GM12878 (cell line): ENCODE measurements at regions of chr13 and their contacts with region 1.

Region 1: GRCh38 chr13:36346222-36347083 is at the start of gene SPART:
- DNase-seq: peak; percentile 34
- ATAC-seq: peak; percentile 86
- H3K4me3 ChIP-seq: peak within 1 kb of the TSS; percentile 77
- H3K27ac ChIP-seq: peak within 1 kb of the TSS; percentile 70
- H3K4me1 ChIP-seq: no peaks in the 10 kb centered on the region
- H3K27me3 ChIP-seq: 0 out of 4 replicates have a peak, but pooled peaks cover 0 to 3% of the 10 kb centered on the region in 2 experiments
- CTCF ChIP-seq: peak; percentile 95 to 98 (median 96)
- EP300 ChIP-seq: no peak
- POLR2A ChIP-seq: peak; percentile 54
- RAD21 ChIP-seq: peak; percentile 83
- polyA plus RNA-seq, gene SPART: 17.6 to 20.9 TPM

Region 2: DNA sequence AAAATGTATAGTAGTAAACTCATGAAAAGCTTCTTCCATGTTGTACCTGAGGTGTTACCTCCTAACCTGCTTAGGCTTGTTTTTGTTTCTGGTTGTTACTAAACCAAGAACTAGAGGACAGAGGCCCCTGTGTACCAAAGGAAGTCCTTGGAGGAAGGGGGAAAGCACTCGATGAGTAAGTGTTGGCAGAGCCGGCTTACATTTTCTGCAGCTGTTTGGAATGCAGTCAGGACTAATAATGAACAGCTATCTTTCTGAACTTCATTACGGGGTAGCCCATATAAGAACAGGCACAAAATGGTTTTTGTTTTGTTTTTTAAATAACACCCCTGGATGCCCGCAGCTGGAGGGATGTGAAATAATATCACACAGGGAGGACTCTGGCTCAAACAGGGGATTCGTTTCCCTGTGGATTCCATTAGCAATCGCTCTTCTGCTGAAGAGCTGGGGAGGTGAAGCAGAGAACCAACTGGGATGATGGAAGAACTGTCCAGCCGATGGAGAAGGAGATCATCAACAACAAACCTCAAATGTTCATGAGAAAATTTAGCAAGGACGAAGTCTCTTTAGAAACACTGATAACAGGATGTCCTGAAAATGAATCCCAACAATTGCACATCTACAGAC is 655.8 kb before region 1 on chr13:
- CTCF ChIA-PET with region 1: no interaction called
- POLR2A ChIA-PET with region 1: no interaction called
- RAD21 ChIA-PET with region 1: no interaction called
- SMC1A ChIA-PET with region 1: no interaction called
- in situ Hi-C with region 1: no loop called
- intact Hi-C with region 1: no loop called
- DNase-seq: no peak
- ATAC-seq: no peak
- H3K4me3 ChIP-seq: no peak overlapping the region
- H3K27ac ChIP-seq: no peak overlapping the region
- H3K4me1 ChIP-seq: no peaks in the 10 kb centered on the region
- H3K27me3 ChIP-seq: no peaks in the 10 kb centered on the region
- CTCF ChIP-seq: no peak
- EP300 ChIP-seq: no peak
- POLR2A ChIP-seq: no peak
- RAD21 ChIP-seq: no peak

Region 3: GRCh38 chr13:35744566-35745178 is 601.8 kb before region 1 on chr13:
- CTCF ChIA-PET with region 1: no interaction called
- POLR2A ChIA-PET with region 1: no interaction called
- RAD21 ChIA-PET with region 1: no interaction called
- SMC1A ChIA-PET with region 1: no interaction called
- in situ Hi-C with region 1: no loop called
- intact Hi-C with region 1: no loop called
- DNase-seq: no peak
- ATAC-seq: no peak
- H3K4me3 ChIP-seq: no peak overlapping the region
- H3K27ac ChIP-seq: no peak overlapping the region
- H3K4me1 ChIP-seq: no peaks in the 10 kb centered on the region
- H3K27me3 ChIP-seq: no peaks in the 10 kb centered on the region
- CTCF ChIP-seq: no peak
- EP300 ChIP-seq: no peak
- POLR2A ChIP-seq: no peak
- RAD21 ChIP-seq: no peak

Region 4: GRCh38 chr13:36057029-36057428 is 289.4 kb before region 1 on chr13:
- CTCF ChIA-PET with region 1: no interaction called
- POLR2A ChIA-PET with region 1: no interaction called
- RAD21 ChIA-PET with region 1: no interaction called
- SMC1A ChIA-PET with region 1: no interaction called
- in situ Hi-C with region 1: no loop called
- intact Hi-C with region 1: no loop called
- DNase-seq: no peak
- ATAC-seq: no peak
- H3K4me3 ChIP-seq: no peak overlapping the region
- H3K27ac ChIP-seq: no peak overlapping the region
- H3K4me1 ChIP-seq: no peaks in the 10 kb centered on the region
- H3K27me3 ChIP-seq: no peaks in the 10 kb centered on the region
- CTCF ChIP-seq: no peak
- EP300 ChIP-seq: no peak
- POLR2A ChIP-seq: no peak
- RAD21 ChIP-seq: no peak

Region 5: DNA sequence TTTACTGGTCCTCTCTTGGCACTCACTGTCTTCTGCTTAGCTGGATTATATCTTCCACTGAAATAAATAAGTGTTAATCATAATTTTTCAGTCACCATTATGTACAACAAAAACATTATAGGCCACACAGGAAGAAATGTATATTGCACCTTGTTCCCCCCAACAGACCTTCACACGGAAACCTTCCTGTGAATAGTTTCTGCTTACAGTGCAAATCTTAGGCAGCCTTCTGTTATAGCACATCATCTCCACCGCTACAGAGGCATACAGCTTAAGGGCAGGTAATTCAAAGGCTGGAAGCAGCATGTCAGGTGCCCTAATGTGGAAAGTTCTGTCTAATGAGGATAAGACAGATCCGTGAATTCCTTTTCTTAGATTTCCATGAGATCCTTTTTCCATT is 115.2 kb before region 1 on chr13:
- CTCF ChIA-PET with region 1: no interaction called
- POLR2A ChIA-PET with region 1: no interaction called
- RAD21 ChIA-PET with region 1: no interaction called
- SMC1A ChIA-PET with region 1: no interaction called
- in situ Hi-C with region 1: no loop called
- intact Hi-C with region 1: no loop called
- DNase-seq: no peak
- ATAC-seq: no peak
- H3K4me3 ChIP-seq: no peak overlapping the region
- H3K27ac ChIP-seq: no peak overlapping the region
- H3K4me1 ChIP-seq: no peaks in the 10 kb centered on the region
- H3K27me3 ChIP-seq: no peaks in the 10 kb centered on the region
- CTCF ChIP-seq: no peak
- EP300 ChIP-seq: no peak
- POLR2A ChIP-seq: no peak
- RAD21 ChIP-seq: no peak

Region 6: GRCh38 chr13:36282818-36283445 is 63.5 kb before region 1 on chr13:
- CTCF ChIA-PET with region 1: interaction called, 15 read pairs
- POLR2A ChIA-PET with region 1: no interaction called
- RAD21 ChIA-PET with region 1: interaction called, 10 read pairs
- SMC1A ChIA-PET with region 1: interaction called, 9 read pairs
- in situ Hi-C with region 1: no loop called
- intact Hi-C with region 1: no loop called
- DNase-seq: no peak
- ATAC-seq: peak; percentile 70
- H3K4me3 ChIP-seq: no peak overlapping the region
- H3K27ac ChIP-seq: no peak overlapping the region
- H3K4me1 ChIP-seq: no peaks in the 10 kb centered on the region
- H3K27me3 ChIP-seq: no peaks in the 10 kb centered on the region
- CTCF ChIP-seq: peak; percentile 61 to 80 (median 68)
- EP300 ChIP-seq: no peak
- POLR2A ChIP-seq: no peak
- RAD21 ChIP-seq: peak; percentile 84

Region 7: GRCh38 chr13:36362251-36362650 is 15.8 kb after region 1 on chr13:
- CTCF ChIA-PET with region 1: interaction called, 26 read pairs
- POLR2A ChIA-PET with region 1: interaction called, 4 read pairs
- RAD21 ChIA-PET with region 1: interaction called, 67 read pairs
- SMC1A ChIA-PET with region 1: interaction called, 30 read pairs
- in situ Hi-C with region 1: no loop called
- intact Hi-C with region 1: no loop called
- DNase-seq: no peak
- ATAC-seq: peak; percentile 73
- H3K4me3 ChIP-seq: no peak overlapping the region
- H3K27ac ChIP-seq: no peak overlapping the region
- H3K4me1 ChIP-seq: no peaks in the 10 kb centered on the region
- H3K27me3 ChIP-seq: no peaks in the 10 kb centered on the region
- CTCF ChIP-seq: no peak
- EP300 ChIP-seq: no peak
- POLR2A ChIP-seq: no peak
- RAD21 ChIP-seq: no peak

Region 8: GRCh38 chr13:36420437-36420891 is 74.0 kb after region 1 on chr13:
- CTCF ChIA-PET with region 1: interaction called, 15 read pairs
- POLR2A ChIA-PET with region 1: interaction called, 3 read pairs
- RAD21 ChIA-PET with region 1: interaction called, 9 read pairs
- SMC1A ChIA-PET with region 1: interaction called, 13 read pairs
- in situ Hi-C with region 1: loop called (anchors 5 kb)
- intact Hi-C with region 1: loop called (anchors 2 kb)
- DNase-seq: peak; percentile 25
- ATAC-seq: peak; percentile 86
- H3K4me3 ChIP-seq: no peak overlapping the region
- H3K27ac ChIP-seq: no peak overlapping the region
- H3K4me1 ChIP-seq: no peaks in the 10 kb centered on the region; the same call in 1 of the 2 replicates
- H3K27me3 ChIP-seq: no peaks in the 10 kb centered on the region
- CTCF ChIP-seq: peak; percentile 79 to 86 (median 84)
- EP300 ChIP-seq: no peak; a peak in 1 of 4 replicates
- POLR2A ChIP-seq: no peak
- RAD21 ChIP-seq: peak; percentile 83

Region 9: GRCh38 chr13:36818804-36819738 is 472.6 kb after region 1 on chr13 and contains the start of gene RFXAP:
- CTCF ChIA-PET with region 1: no interaction called
- POLR2A ChIA-PET with region 1: interaction called, 3 read pairs
- RAD21 ChIA-PET with region 1: interaction called, 3 read pairs
- SMC1A ChIA-PET with region 1: no interaction called
- in situ Hi-C with region 1: no loop called
- intact Hi-C with region 1: loop called (anchors 5 kb)
- DNase-seq: peak; percentile 51
- ATAC-seq: peak; percentile 87
- H3K4me3 ChIP-seq: peak within 1 kb of the TSS; percentile 64
- H3K27ac ChIP-seq: peak within 1 kb of the TSS; percentile 54
- H3K4me1 ChIP-seq: no peaks in the 10 kb centered on the region; the same call in 1 of the 2 replicates
- H3K27me3 ChIP-seq: peaks cover 0 to 3% of the 10 kb centered on the region in 2 experiments; a peak in 2 of 4 replicates
- CTCF ChIP-seq: 0 out of 6 replicates have a peak, but pooled peaks of 2 of the 3 experiments have one; percentile 2 to 20
- EP300 ChIP-seq: no peak
- POLR2A ChIP-seq: peak; percentile 75
- RAD21 ChIP-seq: no peak
- polyA plus RNA-seq, gene RFXAP: 3.4 to 6.7 TPM

Region 10: DNA sequence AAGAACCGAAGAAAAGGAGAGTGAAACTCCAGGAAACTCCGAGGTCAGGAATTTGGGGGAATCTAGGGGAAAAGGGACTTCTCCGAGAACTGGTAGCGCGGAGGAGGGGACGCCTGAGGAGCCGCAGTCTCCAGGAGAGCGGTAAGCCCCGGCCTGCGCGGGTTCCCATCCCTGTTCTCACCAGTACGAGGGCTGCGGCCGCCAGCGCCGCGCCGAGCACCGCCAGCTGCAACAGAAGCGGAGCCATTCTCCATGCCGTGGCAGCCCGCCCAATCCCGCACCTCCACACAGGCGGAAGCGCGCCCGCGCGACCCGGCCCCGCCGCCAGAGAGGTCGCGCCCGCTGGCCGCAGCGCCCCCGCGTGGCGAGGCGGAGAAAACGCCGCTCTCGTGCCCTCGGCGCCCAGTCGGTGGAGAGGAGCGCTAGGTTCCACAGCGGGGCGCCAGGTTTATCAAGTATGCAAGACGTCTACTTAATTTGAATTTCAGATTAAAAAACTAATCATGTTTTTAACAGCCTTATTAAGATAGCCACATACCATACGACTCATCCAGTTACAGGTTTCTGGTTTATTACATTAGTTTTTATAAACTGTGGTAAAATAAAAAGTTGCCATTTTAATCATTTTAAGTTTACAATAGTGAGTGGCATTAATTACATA is 652.7 kb after region 1 on chr13 and contains the start of gene ALG5:
- CTCF ChIA-PET with region 1: interaction called, 3 read pairs
- POLR2A ChIA-PET with region 1: no interaction called
- RAD21 ChIA-PET with region 1: interaction called, 4 read pairs
- SMC1A ChIA-PET with region 1: no interaction called
- in situ Hi-C with region 1: no loop called
- intact Hi-C with region 1: loop called (anchors 5 kb)
- DNase-seq: peak; percentile 44
- ATAC-seq: peak; percentile 78
- H3K4me3 ChIP-seq: peak within 1 kb of the TSS; percentile 100
- H3K27ac ChIP-seq: peak within 1 kb of the TSS; percentile 92
- H3K4me1 ChIP-seq: peaks cover 4% of the 10 kb centered on the region; the same call in 1 of the 2 replicates
- H3K27me3 ChIP-seq: no peaks in the 10 kb centered on the region
- CTCF ChIP-seq: peak; percentile 72 to 99 (median 97); a peak in 5 of 6 replicates
- EP300 ChIP-seq: 0 out of 4 replicates have a peak, but pooled peaks of 1 of the 2 experiments have one; percentile 10
- POLR2A ChIP-seq: peak; percentile 95
- RAD21 ChIP-seq: no peak
- polyA plus RNA-seq, gene ALG5: 61.6 to 79.9 TPM